Transverse colon (tissue), 4 donors: ENCODE measurements at regions of chr22 and their contacts with region 1.

Region 1: GRCh38 chr22:35838855-35839576 is 121.3 kb downstream of the APOL5 start:
- DNase-seq: peak; percentile 28
- H3K4me3 ChIP-seq: peak overlapping the region in 3 of 4 donors; percentile 41 to 51 (median 45)
- H3K27ac ChIP-seq: peak overlapping the region; percentile 84 to 89 (median 87)
- H3K4me1 ChIP-seq: peaks cover 14 to 73% (median 58%) of the 10 kb centered on the region in 4 donors
- H3K27me3 ChIP-seq: no peaks in the 10 kb centered on the region
- CTCF ChIP-seq: peak in 4 of 5 experiments; percentile 17 to 49 (median 30)
- EP300 ChIP-seq: no peak
- POLR2A ChIP-seq: no peak

Region 2: DNA sequence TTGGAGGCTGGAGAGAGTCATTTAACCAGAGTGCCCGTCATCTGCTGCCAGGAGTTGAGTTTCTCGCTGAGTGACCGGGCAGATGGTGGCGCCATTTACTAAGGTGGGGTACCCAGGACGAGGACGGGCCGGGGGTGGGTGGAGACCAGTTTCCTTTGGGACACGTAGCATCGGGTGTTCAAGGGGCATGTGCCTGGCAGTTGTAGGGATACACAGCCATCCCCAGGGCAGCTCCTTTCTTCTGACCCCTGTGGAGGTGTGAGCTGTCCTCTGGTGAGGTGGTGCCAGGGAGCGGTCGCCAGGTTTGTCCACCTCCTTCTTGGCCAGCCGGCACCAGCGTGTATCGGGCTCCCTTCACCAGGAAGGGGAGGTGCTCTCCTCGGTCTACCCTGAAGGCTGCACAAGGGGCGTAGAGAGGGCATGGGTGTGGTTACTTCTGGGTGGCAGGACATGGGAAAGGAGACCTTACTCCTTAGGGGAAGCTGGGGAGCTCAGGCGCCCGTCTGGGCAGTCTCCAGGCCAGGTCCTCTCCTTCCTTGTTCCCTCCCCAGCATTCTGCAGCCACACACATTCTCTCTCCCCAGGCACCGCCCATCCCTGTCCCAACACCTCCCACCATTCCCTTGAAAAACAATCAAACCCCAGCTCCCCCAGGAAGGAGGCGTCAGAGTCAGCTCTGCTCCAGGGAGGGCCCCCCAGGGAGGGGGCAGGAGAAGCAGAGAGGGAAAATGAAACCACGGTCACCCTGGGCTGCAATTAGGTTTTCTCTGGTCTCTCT is 211.6 kb before region 1 on chr22:
- in situ Hi-C with region 1: no loop called
- intact Hi-C with region 1: loop called (anchors 10 kb)
- DNase-seq: peak; percentile 90
- H3K4me3 ChIP-seq: peak overlapping the region; percentile 43 to 58 (median 54)
- H3K27ac ChIP-seq: peak overlapping the region; percentile 88 to 96 (median 91)
- H3K4me1 ChIP-seq: peaks cover 7 to 16% (median 13%) of the 10 kb centered on the region in 4 donors
- H3K27me3 ChIP-seq: no peaks in the 10 kb centered on the region
- CTCF ChIP-seq: peak; percentile 37 to 58 (median 43)
- EP300 ChIP-seq: no peak
- POLR2A ChIP-seq: peak; percentile 80

Region 3: DNA sequence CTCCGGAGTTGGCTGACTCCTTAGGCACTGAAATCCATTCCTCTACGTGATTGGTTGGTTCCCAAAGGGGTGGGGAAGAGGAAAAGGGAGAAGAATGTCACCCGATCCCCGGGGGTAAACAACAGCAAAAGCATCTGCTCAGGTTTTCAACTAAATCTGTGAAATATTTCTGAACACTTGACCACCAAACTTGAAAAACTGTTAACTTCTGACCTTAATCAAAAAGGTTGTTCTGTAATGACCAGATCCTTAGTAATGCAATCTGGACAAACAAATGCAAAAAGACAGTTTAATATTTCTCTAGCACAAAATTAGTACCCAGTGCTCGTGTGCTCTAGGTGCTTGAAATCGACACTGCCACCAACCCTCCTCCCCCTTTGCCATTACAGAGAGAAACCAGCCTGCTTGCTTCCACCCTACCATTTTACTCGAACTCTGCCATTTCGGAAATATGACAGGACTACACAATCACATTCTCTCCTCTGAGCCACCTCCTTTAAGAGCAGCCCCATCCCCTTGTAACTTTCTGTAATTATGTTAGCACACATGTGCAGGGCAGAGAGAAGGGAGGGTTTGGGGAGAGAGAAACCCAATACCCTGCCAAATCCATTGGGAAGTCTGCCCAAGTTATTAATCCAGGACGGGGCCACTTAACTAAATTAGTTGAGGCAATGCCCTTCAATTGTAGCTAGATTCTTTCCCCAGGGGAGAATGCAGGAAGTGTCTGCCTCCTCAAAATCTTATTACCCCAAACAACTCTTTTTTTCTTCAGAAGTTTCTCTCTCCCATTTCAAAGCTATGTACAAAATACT is 75.9 kb after region 1 on chr22:
- in situ Hi-C with region 1: no loop called
- intact Hi-C with region 1: loop called (anchors 10 kb)
- DNase-seq: peak; percentile 68
- H3K4me3 ChIP-seq: peak overlapping the region; percentile 23 to 50 (median 32)
- H3K27ac ChIP-seq: peak overlapping the region; percentile 75 to 86 (median 82)
- H3K4me1 ChIP-seq: peaks cover 0 to 65% (median 20%) of the 10 kb centered on the region in 4 donors
- H3K27me3 ChIP-seq: no peaks in the 10 kb centered on the region
- CTCF ChIP-seq: no peak
- EP300 ChIP-seq: no peak
- POLR2A ChIP-seq: no peak